ENCODE measurements at regions of chr1 and their contacts with region 1.

Region 1: DNA sequence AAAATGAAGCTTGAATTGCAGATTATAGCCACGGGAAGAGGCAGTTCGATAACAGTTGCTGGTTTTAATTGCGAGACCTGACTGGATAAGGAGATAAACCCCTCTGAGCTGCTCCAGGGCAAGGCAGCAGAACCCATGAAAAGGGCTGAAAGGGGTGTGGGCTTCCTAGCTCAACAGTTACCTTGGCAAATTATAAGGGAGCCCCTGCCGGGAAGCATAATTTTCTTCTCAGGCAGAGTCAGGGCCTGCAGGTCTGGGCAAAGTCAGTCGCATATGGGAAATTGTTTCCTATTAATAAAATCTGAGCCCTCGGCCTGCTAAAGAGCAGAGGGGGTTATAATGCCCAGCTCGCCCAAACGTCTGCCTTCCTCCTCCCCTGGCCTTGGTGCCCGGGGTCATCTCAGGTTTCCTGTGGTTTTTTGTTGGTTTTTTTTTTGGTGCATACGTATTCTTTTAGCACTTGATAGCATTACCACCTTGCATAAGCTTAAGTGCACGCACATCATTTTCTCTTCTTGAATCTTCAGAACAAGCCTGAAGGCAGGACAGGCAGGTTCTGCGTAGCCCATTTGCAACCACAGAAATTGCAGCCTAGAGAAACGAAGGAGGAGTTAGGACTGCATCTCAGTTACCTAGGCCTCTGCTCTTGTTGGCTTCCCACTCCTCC is 33.9 kb upstream of the SELENON start:
- DNase-seq: no peak
- H3K4me3 ChIP-seq: no peak overlapping the region
- H3K27ac ChIP-seq: no peak overlapping the region
- H3K4me1 ChIP-seq: no peaks in the 10 kb centered on the region
- H3K27me3 ChIP-seq: no peaks in the 10 kb centered on the region
- CTCF ChIP-seq: no peak
- POLR2A ChIP-seq: no peak

Region 2: GRCh38 chr1:25782608-25783201 is 16.6 kb after region 1 on chr1:
- intact Hi-C with region 1: loop called (anchors 2 kb)
- DNase-seq: no peak
- H3K4me3 ChIP-seq: no peak overlapping the region
- H3K27ac ChIP-seq: no peak overlapping the region
- H3K4me1 ChIP-seq: peaks cover 0 to 3% of the 10 kb centered on the region in 2 donors
- H3K27me3 ChIP-seq: no peaks in the 10 kb centered on the region
- CTCF ChIP-seq: no peak
- POLR2A ChIP-seq: no peak